ENCODE measurements at regions of chr9 and their contacts with region 1.

Region 1: DNA sequence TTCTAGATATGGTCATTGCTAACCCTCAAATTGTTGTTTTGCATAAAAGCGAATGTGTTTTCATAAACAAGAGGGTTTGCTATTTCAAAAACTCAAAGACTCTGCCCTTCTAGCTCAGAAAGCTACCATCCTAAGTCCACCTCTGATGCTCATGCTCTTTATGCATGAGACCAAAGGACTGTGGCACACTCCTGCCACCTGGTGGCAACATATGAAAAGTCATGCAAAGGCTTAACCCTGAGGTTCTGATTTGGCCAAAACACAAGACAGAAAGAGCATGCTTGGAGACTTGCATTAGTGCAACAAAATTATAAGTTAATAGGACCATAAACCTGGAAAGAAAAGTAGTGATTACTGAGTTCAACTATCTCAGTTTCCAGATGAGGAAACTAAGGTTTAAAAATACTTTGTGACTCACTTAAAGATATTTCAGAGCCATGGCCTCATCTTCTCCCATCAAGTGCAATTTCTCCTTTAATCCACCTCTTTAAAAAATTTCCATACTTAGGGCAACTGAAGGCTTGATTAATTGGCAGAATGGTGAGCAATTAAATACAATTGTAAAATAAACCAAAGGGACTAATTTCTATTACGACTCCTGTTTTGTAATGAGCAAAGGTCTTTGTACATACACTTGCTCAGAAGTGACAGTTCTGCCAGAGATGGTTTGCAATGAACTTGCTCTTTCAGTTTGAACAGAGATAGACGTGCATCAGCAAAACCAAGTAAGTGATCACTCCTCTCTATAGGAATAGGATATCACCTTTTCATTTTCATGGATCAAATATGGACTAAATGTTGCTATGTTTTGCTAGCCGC is 110.7 kb upstream of the RAD23B start:
- DNase-seq: peak; percentile 76 to 87
- ATAC-seq: peak; percentile 84
- H3K4me3 ChIP-seq: no peak overlapping the region
- H3K27ac ChIP-seq: no peak overlapping the region
- H3K4me1 ChIP-seq: no peaks in the 10 kb centered on the region
- H3K27me3 ChIP-seq: no peaks in the 10 kb centered on the region

Region 2: GRCh38 chr9:107067739-107068416 is 104.5 kb before region 1 on chr9:
- intact Hi-C with region 1: no loop called
- DNase-seq: no peak
- ATAC-seq: no peak
- H3K4me3 ChIP-seq: no peak overlapping the region
- H3K27ac ChIP-seq: no peak overlapping the region
- H3K4me1 ChIP-seq: no peaks in the 10 kb centered on the region
- H3K27me3 ChIP-seq: no peaks in the 10 kb centered on the region

Region 3: GRCh38 chr9:107137495-107138202 is 34.7 kb before region 1 on chr9:
- intact Hi-C with region 1: loop called (anchors 2 to 5 kb)
- DNase-seq: no peak
- ATAC-seq: peak; percentile 67
- H3K4me3 ChIP-seq: no peak overlapping the region
- H3K27ac ChIP-seq: no peak overlapping the region
- H3K4me1 ChIP-seq: peaks cover 4% of the 10 kb centered on the region in 2 donors
- H3K27me3 ChIP-seq: no peaks in the 10 kb centered on the region

Region 4: GRCh38 chr9:107239474-107239873 is 67.1 kb after region 1 on chr9:
- intact Hi-C with region 1: no loop called
- DNase-seq: no peak
- ATAC-seq: no peak
- H3K4me3 ChIP-seq: no peak overlapping the region
- H3K27ac ChIP-seq: no peak overlapping the region
- H3K4me1 ChIP-seq: no peaks in the 10 kb centered on the region
- H3K27me3 ChIP-seq: no peaks in the 10 kb centered on the region

Region 5: GRCh38 chr9:107363516-107364152 is 191.3 kb after region 1 on chr9:
- intact Hi-C with region 1: no loop called
- DNase-seq: no peak
- ATAC-seq: no peak
- H3K4me3 ChIP-seq: no peak overlapping the region
- H3K27ac ChIP-seq: no peak overlapping the region
- H3K4me1 ChIP-seq: no peaks in the 10 kb centered on the region
- H3K27me3 ChIP-seq: no peaks in the 10 kb centered on the region

Measured in aorta (tissue), 5 donors.